ENCODE measurements at regions of chr18 and their contacts with region 1.

Region 1: GRCh38 chr18:44589693-44590355 is 90.9 kb upstream of the SETBP1 start:
- DNase-seq: no peak
- H3K4me3 ChIP-seq: no peak overlapping the region
- H3K27ac ChIP-seq: no peak overlapping the region
- H3K27me3 ChIP-seq: no peaks in the 10 kb centered on the region
- CTCF ChIP-seq: no peak

Region 2: GRCh38 chr18:44548291-44549221 is 41.3 kb before region 1 on chr18:
- CTCF ChIA-PET with region 1: no interaction called
- POLR2A ChIA-PET with region 1: no interaction called
- DNase-seq: no peak
- H3K4me3 ChIP-seq: no peak overlapping the region
- H3K27ac ChIP-seq: no peak overlapping the region
- H3K27me3 ChIP-seq: no peaks in the 10 kb centered on the region
- CTCF ChIP-seq: no peak

Region 3: DNA sequence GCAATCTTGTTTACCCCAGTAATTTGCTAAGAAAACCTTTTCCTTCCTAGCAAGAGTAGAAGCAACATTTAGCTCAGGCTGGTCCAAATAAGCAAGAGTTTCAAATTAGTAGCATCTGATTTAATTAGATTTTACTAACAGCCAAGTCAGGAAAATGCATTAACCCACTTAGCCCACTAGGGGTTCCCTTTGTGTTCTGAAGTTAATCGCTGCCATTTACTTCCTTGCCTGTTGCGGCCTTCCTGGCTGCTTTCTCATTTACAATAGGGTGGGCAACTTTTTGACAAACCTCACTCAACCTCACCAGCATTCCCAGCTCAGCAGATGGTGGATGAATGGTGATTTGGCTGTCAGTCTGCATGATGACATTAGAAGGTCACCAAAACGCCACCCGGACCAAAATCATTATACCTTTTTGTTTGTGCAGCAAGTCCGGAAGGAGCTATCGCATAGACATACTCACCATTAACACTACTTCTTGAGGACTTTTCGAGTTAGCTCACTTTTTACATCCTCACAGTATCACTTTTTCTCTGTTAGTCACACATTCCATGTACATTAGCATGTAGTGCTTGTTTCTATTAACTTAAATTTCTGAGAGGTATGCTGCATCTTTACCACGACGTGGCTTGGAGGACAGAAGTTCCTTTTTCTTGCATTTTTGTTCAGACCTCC is 10.7 kb before region 1 on chr18:
- CTCF ChIA-PET with region 1: interaction called, 10 read pairs
- POLR2A ChIA-PET with region 1: no interaction called
- DNase-seq: no peak
- H3K4me3 ChIP-seq: no peak overlapping the region
- H3K27ac ChIP-seq: no peak overlapping the region
- H3K27me3 ChIP-seq: no peaks in the 10 kb centered on the region
- CTCF ChIP-seq: peak; percentile 58

Region 4: DNA sequence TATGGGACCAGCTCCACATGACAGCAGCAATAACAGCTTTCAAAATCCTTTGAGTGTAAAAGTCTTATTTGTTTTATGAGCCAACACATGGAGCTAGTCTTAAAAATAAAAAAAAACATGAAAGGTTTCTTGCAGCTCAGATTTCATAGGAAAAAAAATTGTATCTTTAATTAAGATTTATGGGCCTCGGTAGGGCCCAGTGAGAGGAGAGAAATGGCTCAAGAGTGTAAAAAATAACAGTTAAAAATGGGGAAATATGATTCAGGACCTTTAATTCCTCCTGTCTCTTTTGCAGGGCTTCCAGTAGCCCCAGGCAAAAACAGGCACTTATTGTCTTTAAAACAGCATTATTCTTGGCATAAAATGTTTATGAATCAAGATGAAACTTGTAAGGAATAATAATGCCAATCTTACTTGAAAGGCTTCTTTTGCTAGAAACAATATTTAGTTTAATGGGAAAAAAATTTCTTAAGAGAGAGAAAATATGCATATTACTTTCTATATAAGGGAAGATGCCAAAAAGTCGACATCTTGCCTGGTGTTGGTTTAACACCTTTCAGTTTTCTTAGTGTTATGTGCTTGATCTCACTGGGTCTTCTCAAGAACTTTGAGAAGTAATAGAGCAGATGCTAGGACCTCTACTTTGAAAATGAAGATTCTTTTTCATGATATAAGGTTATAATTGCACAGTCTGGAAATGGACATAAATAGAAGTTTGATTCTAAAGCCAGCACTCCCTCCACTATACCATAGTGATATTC is 19.5 kb after region 1 on chr18:
- CTCF ChIA-PET with region 1: no interaction called
- POLR2A ChIA-PET with region 1: no interaction called
- DNase-seq: no peak
- H3K4me3 ChIP-seq: no peak overlapping the region
- H3K27ac ChIP-seq: no peak overlapping the region
- H3K27me3 ChIP-seq: no peaks in the 10 kb centered on the region
- CTCF ChIP-seq: no peak

Region 5: GRCh38 chr18:44758861-44759631 is 169.2 kb after region 1 on chr18:
- CTCF ChIA-PET with region 1: no interaction called
- POLR2A ChIA-PET with region 1: no interaction called
- DNase-seq: no peak
- H3K4me3 ChIP-seq: no peak overlapping the region
- H3K27ac ChIP-seq: no peak overlapping the region
- H3K27me3 ChIP-seq: no peaks in the 10 kb centered on the region
- CTCF ChIP-seq: no peak